ENCODE measurements at regions of chr12 and their contacts with region 1.

Region 1: GRCh38 chr12:54279866-54280467 is at the start of gene CBX5:
- DNase-seq: peak; percentile 98 to 100
- ATAC-seq: peak; percentile 76 to 91 (median 82)
- H3K4me3 ChIP-seq: peak within 1 kb of the TSS; percentile 50 to 88 (median 74)
- H3K27ac ChIP-seq: peak within 1 kb of the TSS; percentile 84 to 95 (median 92)
- H3K4me1 ChIP-seq: peaks cover 12 to 63% (median 52%) of the 10 kb centered on the region in 9 donors
- H3K27me3 ChIP-seq: no peaks in the 10 kb centered on the region
- CTCF ChIP-seq: no peak
- total RNA-seq, gene CBX5: 44.4 to 53.5 (median 49.7) TPM

Region 2: DNA sequence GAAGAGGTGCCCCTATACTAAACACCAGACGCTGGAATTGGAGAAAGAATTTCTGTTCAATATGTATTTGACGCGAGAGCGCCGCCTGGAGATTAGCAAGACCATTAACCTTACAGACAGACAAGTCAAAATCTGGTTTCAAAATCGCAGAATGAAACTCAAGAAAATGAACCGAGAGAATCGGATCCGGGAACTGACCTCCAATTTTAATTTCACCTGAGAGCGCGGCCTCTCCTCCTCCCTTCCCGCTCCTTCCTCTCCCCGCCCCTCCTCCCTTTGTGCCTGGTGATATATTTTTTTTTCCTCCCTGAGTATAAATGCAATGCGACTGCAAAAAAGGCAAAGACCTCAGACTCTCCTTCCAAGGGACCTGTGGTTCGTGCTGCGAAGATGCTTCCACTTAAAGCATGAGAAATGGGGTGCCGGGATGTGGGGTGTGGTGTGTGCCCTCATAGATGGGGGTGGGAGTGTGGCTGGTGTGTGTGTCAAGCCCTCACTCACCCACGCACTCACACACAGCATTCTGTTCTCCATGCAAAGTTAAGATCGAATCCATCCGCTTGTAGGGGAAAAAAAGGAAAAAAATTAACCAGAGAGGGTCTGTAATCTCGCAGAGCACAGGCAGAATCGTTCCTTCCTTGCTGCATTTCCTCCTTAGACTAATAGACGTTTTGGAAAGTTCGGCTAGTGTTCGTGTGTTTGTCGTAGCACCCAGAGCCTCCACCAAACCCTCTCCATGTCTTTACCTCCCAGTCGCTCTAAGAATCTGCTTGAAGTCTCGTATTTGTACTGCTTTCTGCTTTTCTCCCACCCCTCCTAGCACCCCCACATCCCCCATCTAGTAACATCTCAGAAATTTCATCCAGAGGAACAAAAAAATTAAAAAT is 290.5 kb before region 1 on chr12:
- intact Hi-C with region 1: no loop called
- DNase-seq: no peak
- ATAC-seq: no peak
- H3K4me3 ChIP-seq: no peak overlapping the region
- H3K27ac ChIP-seq: no peak overlapping the region
- H3K4me1 ChIP-seq: peaks cover 4 to 32% (median 24%) of the 10 kb centered on the region in 9 donors
- H3K27me3 ChIP-seq: peaks cover 71 to 100% (median 100%) of the 10 kb centered on the region in 7 donors
- CTCF ChIP-seq: peak in 5 of 9 donors; percentile 15 to 38 (median 28)

Region 3: DNA sequence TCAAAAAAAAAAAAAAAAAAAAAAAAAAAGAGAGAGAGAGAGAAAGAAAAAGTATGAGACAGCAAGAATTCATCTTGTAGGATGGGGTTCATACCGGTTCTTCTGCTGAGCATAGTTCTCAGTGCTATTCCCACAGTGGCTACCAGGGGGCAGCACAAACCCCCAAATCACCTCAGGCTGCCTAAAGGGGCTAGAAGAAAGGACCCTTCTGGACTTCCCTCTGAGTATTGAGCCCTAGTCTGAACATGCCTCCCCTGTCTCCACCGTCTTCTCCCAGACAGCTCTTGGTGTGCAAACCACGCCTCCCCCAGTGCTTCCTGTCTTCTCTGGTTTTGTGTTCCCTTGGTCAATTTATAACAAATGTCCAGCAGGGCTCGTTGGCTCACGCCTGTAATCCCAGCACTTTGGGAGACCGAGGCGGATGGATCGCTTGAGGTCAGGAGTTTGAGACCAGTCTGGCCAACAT is 59.8 kb before region 1 on chr12:
- intact Hi-C with region 1: loop called in 1 of 10 experiments (anchors 10 kb)
- DNase-seq: peak; percentile 54 to 64
- ATAC-seq: peak; percentile 14 to 77 (median 55)
- H3K4me3 ChIP-seq: no peak overlapping the region
- H3K27ac ChIP-seq: no peak overlapping the region
- H3K4me1 ChIP-seq: peaks cover 0 to 38% (median 24%) of the 10 kb centered on the region in 9 donors
- H3K27me3 ChIP-seq: peaks cover 0 to 36% (median 9%) of the 10 kb centered on the region in 7 donors
- CTCF ChIP-seq: peak; percentile 59 to 82 (median 76)

Region 4: GRCh38 chr12:54259194-54260011 is 20.6 kb before region 1 on chr12:
- intact Hi-C with region 1: loop called in 5 of 10 experiments (anchors 1 to 5 kb)
- DNase-seq: peak; percentile 60 to 82
- ATAC-seq: peak; percentile 89 to 97 (median 95)
- H3K4me3 ChIP-seq: peak overlapping the region; percentile 19 to 65 (median 51)
- H3K27ac ChIP-seq: peak overlapping the region; percentile 66 to 93 (median 80)
- H3K4me1 ChIP-seq: peaks cover 7 to 61% (median 47%) of the 10 kb centered on the region in 9 donors
- H3K27me3 ChIP-seq: no peaks in the 10 kb centered on the region
- CTCF ChIP-seq: no peak

Region 5: DNA sequence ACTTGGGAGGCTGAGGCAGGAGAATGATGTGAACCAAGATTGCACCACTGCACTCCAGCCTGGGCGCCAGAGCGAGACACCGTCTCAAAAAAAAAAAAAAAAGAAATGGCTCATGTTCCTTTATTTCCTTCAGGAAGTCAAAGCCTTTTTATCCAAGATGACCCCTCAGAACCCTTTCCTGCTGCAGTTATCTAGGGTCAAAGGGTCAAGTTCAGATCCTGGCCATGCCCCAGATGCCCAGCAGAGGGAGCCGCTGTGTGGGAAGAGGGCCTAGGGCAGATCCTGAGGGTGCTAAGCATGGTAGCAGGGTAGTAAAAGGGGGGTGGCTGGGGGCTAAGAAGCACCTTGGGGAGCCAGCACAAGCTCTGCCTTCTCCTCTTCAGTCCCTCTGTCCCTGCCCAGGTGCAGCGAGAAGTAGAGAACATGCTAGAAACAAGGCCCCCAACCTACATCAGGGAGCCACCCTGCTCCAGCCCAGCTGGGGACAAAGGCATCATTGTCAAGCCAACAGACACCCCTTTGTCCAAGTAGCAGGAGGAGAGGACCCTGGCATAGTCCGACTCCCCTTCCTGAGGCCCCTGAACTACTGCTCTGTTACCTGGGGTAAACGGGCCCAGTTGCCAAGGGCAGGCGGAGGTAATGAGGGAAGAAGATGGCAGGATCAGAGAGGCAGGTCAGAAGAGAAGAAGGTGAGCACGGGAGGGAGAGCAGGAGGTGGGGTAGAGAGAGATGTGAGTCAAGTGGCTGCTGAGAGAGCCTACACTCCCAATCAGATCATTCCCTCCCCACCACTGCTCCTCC is 14.4 kb after region 1 on chr12:
- intact Hi-C with region 1: no loop called
- DNase-seq: peak in 1 of 2 donors; percentile 58
- ATAC-seq: peak in 7 of 8 donors; percentile 32 to 70 (median 59)
- H3K4me3 ChIP-seq: peak overlapping the region in 1 of 10 donors; percentile 20
- H3K27ac ChIP-seq: peak overlapping the region in 1 of 10 donors; percentile 38
- H3K4me1 ChIP-seq: peaks cover 0 to 8% (median 0%) of the 10 kb centered on the region in 9 donors
- H3K27me3 ChIP-seq: peaks cover 4 to 13% (median 9%) of the 10 kb centered on the region in 7 donors
- CTCF ChIP-seq: peak in 8 of 9 donors; percentile 10 to 75 (median 63)

Region 6: DNA sequence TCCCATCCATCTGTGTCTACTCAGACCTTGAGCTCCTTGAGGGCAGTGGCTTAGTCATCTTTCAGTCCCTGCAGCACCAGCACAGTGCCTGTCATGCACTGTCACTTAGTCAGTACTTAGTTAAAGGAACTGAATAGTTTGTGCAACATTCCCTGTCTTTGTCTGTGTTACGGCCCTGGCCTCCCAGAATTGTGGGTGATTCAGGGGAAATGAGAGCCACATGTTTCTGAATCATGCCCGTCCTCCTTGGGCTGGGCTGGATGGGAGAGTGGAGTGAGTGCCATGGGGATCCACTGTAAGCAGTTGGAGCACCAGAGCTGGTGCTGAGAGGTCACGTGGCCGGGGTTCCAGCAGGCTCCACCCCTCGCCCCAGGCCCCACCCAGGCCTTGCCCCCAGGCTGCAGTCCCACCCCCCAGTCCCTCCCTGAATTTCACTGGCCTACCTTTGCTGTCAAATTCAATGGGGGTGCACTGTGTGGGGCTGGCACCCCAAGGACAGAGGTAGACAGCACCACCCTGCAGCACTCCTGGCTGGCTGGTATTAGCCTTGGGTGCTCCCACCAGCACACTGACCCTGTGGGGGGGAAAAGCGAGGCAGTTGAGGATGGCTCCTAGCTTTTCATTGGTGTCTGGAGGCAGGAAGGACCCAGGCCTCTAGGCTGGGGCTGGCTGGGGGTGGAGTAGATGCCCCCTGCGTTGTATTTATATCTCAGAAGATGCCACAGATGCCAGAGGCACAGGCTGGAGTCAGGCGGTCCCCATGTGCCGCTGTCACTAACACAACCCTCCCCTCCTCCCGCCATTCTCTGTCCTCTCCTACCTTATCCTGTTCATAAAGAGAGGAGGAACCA is 131.6 kb after region 1 on chr12:
- intact Hi-C with region 1: no loop called
- DNase-seq: peak in 1 of 2 donors; percentile 61
- ATAC-seq: peak; percentile 49 to 74 (median 64)
- H3K4me3 ChIP-seq: peak overlapping the region in 1 of 10 donors; percentile 2
- H3K27ac ChIP-seq: peak overlapping the region; percentile 57 to 98 (median 84)
- H3K4me1 ChIP-seq: peaks cover 37 to 98% (median 84%) of the 10 kb centered on the region in 9 donors
- H3K27me3 ChIP-seq: no peaks in the 10 kb centered on the region
- CTCF ChIP-seq: no peak

Region 7: GRCh38 chr12:54641554-54641953 is 361.6 kb after region 1 on chr12:
- intact Hi-C with region 1: no loop called
- DNase-seq: no peak
- ATAC-seq: no peak
- H3K4me3 ChIP-seq: no peak overlapping the region
- H3K27ac ChIP-seq: no peak overlapping the region
- H3K4me1 ChIP-seq: no peaks in the 10 kb centered on the region
- H3K27me3 ChIP-seq: peaks cover 0 to 23% (median 9%) of the 10 kb centered on the region in 7 donors
- CTCF ChIP-seq: no peak